Activated CD4-positive, alpha-beta T cell treated with anti-CD3 and anti-CD28 coated beads, Interleukin-2, amount 10 ng/mL, durations not matched to agents 7 days and 5 days (primary cell): ENCODE measurements at regions of chr1 and their contacts with region 1.

Region 1: DNA sequence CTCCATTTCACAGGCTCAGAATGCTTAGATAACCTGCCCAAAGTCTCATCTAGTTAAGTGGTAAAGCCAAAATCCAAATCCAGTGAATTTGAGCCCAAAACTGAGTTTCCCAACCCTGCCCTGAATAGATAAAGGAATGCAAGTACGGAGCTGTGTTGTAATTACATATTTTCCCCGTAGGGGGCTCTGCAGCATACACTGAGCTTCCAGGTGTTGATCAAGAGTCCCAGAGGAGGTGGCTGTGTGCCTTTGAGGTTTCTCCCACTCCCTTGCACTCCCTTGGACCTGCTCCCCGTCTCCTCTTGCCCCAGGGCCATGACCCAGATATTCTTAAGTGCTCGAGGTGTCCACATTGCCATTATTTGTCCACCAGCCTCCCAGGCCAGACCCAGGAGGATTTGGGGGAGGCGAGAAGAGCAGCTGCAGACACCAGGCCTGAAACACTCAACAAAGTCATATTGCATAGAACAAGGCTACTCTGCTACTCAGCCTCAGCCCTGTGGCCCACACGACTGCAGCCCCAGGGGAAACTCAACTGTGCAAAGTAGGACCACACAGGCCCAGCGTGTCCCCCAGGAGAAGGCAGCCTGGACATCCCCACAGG is 18.4 kb upstream of the LY9 start:
- DNase-seq: peak; percentile 62
- H3K4me3 Mint-ChIP-seq: no peak overlapping the region
- H3K27ac Mint-ChIP-seq: no peak overlapping the region
- H3K4me1 Mint-ChIP-seq: peaks cover 46% of the 10 kb centered on the region
- H3K27me3 Mint-ChIP-seq: no peaks in the 10 kb centered on the region

Region 2: DNA sequence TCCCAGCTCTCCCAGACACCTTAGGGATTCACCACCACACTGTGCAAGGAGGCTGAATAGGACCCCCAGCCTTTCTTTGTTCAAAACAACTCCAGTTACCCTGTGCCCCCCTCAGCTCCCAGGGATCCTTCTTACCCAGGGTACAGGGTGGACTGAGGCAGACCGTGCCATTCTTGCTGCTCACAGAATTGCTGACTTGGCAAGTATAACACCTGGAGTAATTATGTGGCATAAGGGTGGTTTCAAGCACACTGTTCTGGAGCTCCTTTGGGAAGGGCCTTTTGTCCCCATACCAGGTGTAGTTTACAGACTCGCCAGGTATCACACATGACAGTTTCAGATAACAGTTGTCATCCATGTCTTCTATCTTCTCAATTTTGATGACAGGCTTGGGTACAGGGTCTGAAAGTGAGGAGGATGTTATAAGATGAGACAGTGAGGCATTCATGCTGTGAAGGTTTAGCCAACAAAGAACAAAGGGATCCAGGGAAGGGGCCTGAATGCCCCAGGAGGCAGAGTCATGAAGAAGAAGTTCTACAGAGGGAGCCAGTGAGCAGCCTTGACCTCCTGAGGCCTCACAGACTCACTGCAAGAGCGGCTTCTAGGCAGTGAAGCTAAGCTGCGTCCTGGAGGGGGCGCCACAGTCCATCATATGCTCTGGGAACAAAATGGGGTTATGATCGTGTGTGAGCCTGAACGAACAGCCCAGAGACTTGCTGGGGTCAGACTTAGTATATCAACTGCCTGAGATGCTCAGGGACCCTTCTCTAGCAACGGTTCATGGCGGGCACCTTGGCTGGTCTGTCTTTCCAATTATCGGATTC is 96.3 kb before region 1 on chr1:
- CTCF ChIA-PET with region 1: interaction called, 12 read pairs
- POLR2A ChIA-PET with region 1: no interaction called
- DNase-seq: peak; percentile 90
- H3K4me3 Mint-ChIP-seq: no peak overlapping the region
- H3K27ac Mint-ChIP-seq: peak overlapping the region; percentile 91
- H3K4me1 Mint-ChIP-seq: peaks cover 71% of the 10 kb centered on the region
- H3K27me3 Mint-ChIP-seq: no peaks in the 10 kb centered on the region

Region 3: DNA sequence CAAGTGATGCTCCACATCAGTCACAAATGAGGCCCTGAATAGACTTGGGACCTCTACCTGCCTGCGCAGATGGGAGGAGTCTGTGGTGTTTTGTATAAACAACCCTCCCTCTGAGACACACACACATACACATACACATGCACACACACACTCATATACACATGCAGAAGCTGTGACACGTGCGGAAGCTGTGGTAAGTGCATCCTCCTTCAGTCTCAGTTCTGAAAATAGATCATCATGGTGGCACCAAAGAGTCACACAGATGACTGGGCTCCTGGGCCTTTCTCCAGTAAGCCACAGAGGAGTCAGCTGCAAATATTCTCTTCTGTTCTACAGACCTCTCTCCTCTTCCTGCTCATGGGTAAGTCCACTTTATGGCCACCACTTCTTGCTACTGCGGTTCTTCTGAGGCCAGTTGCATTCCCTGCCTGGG is 18.4 kb after region 1 on chr1 and contains the start of gene LY9:
- CTCF ChIA-PET with region 1: interaction called, 11 read pairs
- POLR2A ChIA-PET with region 1: no interaction called
- DNase-seq: peak; percentile 91
- H3K4me3 Mint-ChIP-seq: peak within 1 kb of the TSS; percentile 86
- H3K27ac Mint-ChIP-seq: peak within 1 kb of the TSS; percentile 92
- H3K4me1 Mint-ChIP-seq: peaks cover 61% of the 10 kb centered on the region
- H3K27me3 Mint-ChIP-seq: no peaks in the 10 kb centered on the region
- total RNA-seq, gene LY9: 45.9 to 49.0 TPM